A549 (cell line): ENCODE measurements at regions of chr17 and their contacts with region 1.

Region 1: GRCh38 chr17:45172454-45173286 is 11.0 kb downstream of the HEXIM2 start:
- DNase-seq: peak; percentile 90 to 99
- ATAC-seq: peak; percentile 73 to 79
- H3K4me3 ChIP-seq: peak overlapping the region; percentile 36
- H3K27ac ChIP-seq: peak overlapping the region; percentile 96 to 100
- H3K4me1 ChIP-seq: peaks cover 79% of the 10 kb centered on the region
- CTCF ChIP-seq: 0 out of 3 replicates have a peak, but pooled peaks have one; percentile 24
- EP300 ChIP-seq: peak; percentile 86 to 95
- POLR2A ChIP-seq: peak; percentile 46
- RAD21 ChIP-seq: peak; percentile 36 to 75

Region 2: DNA sequence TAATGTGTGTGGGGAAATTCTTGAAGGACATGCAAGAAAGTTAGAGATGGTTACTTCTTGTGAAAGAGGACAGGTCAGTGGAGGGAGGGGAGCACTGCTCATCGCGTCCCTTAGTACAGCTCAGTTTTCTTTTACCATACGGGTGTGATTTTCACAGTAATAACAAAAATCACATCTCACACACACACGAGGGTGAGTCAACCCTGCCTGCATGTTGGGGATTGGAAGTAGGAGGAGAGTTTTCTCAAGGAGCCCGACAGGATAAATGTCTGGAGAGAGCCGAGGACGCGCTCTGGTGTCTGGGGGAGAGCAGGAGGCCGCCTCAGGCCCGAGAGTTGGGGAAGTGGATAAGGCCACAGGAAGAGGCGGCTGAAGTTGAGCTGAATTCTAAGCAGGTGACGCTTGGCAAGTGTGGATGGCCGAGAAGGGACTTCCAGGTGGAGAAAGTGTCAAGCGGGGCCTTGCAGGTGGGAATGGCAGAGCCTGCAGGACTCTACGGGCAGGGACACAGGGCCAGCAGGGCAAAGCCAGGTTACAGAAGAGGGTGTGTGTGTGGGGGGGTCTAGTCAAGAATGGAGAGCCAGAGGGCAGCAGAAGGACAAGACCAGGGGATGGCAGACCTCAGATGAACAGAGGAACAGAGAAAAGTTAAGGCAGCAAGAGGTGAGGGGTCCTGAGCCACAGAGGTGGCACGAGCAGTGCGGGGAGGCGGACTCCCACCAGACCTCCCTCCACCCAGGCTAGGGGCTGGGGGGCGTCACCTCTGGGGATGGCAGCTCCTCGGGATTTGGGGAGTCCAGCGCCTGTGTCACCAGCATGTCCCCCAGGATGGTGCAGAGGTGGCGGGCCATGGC is 56.6 kb before region 1 on chr17:
- CTCF ChIA-PET with region 1: no interaction called
- POLR2A ChIA-PET with region 1: no interaction called
- DNase-seq: no peak
- ATAC-seq: no peak
- H3K4me3 ChIP-seq: no peak overlapping the region
- H3K27ac ChIP-seq: peak overlapping the region in 1 of 2 experiments; percentile 37; a peak in 2 of 6 replicates
- H3K4me1 ChIP-seq: 0 out of 3 replicates have a peak, but pooled peaks cover 3% of the 10 kb centered on the region
- CTCF ChIP-seq: no peak
- EP300 ChIP-seq: no peak
- POLR2A ChIP-seq: no peak
- RAD21 ChIP-seq: no peak

Region 3: DNA sequence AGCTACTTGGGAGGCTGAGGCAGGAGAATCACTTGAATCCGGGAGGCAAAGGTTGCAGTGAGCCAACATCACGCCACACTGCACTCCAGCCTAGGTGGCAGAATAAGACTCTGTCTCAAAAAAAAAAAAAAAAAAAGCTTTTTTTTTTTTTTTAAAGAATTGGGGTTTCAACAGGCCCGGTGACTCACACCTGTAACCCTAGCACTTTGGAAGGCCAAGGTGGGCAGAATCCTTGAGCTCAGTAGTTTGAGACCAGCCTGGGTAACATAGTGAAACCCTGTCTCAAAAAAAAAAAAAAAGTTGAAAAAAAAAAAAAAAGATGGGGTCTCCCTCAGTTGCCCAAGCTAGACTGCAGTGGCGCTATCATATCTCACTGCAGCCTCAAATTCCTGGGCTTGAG is 17.6 kb before region 1 on chr17:
- CTCF ChIA-PET with region 1: interaction called, 540 read pairs
- POLR2A ChIA-PET with region 1: interaction called, 371 read pairs
- DNase-seq: no peak
- ATAC-seq: no peak
- H3K4me3 ChIP-seq: no peak overlapping the region
- H3K27ac ChIP-seq: peak overlapping the region; percentile 21 to 68; a peak in 4 of 6 replicates
- H3K4me1 ChIP-seq: peaks cover 47% of the 10 kb centered on the region
- CTCF ChIP-seq: no peak
- EP300 ChIP-seq: no peak
- POLR2A ChIP-seq: no peak
- RAD21 ChIP-seq: no peak

Region 4: GRCh38 chr17:45161019-45161825 is 11.4 kb before region 1 on chr17:
- CTCF ChIA-PET with region 1: interaction called, 84 read pairs
- POLR2A ChIA-PET with region 1: interaction called, 221 read pairs
- DNase-seq: peak; percentile 98 to 100
- ATAC-seq: peak; percentile 95 to 96
- H3K4me3 ChIP-seq: peak overlapping the region; percentile 81
- H3K27ac ChIP-seq: peak overlapping the region; percentile 98 to 99
- H3K4me1 ChIP-seq: peaks cover 39% of the 10 kb centered on the region
- CTCF ChIP-seq: no peak; the same call in 1 of the 3 replicates
- EP300 ChIP-seq: no peak
- POLR2A ChIP-seq: peak; percentile 48
- RAD21 ChIP-seq: no peak; a peak in 2 of 5 replicates

Region 5: GRCh38 chr17:45184144-45184543 is 11.5 kb after region 1 on chr17:
- CTCF ChIA-PET with region 1: interaction called, 2,147 read pairs
- POLR2A ChIA-PET with region 1: interaction called, 12 read pairs
- DNase-seq: no peak
- ATAC-seq: no peak
- H3K4me3 ChIP-seq: no peak overlapping the region
- H3K27ac ChIP-seq: peak overlapping the region; percentile 60 to 79
- H3K4me1 ChIP-seq: peaks cover 23% of the 10 kb centered on the region
- CTCF ChIP-seq: no peak
- EP300 ChIP-seq: no peak
- POLR2A ChIP-seq: no peak
- RAD21 ChIP-seq: no peak

Region 6: DNA sequence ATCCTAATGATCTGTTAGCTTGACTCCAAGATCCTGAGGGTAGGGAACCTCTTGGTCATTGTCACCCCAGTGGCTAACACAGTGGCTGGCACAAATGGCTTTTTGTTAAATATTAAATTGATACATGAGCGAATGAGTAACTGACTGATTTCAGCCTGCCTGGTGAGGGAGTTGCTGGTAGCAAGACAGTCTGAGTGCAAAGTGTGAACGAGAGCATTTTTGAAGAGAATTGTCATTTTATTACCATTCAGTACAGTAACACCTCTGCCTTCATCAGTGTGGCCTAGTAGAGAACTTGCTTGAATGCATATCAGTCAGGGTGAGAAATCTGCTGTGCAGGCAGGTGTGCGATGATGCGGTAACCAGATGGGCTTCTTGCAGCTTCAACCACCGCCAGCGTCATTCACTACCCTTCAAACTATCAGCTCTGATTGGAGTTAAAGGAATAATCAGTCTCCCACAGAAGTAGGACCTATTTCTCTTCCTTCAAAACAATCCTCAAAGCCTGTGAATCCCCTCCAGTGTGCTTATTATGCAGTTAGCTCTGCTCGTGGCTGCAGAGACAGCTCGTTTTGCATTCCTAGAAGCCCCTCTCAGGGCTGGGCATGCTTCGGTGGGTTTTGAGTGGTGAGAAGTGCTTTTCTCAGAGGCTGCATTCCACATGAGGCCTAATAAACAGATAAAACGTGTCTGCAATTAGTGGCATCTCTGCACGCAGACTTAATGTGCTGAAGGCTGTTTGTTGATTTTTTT is 18.0 kb after region 1 on chr17:
- CTCF ChIA-PET with region 1: interaction called, 2,147 read pairs
- POLR2A ChIA-PET with region 1: interaction called, 12 read pairs
- DNase-seq: no peak
- ATAC-seq: peak in 1 of 2 experiments; percentile 52; a peak in 1 of 6 replicates
- H3K4me3 ChIP-seq: no peak overlapping the region
- H3K27ac ChIP-seq: peak overlapping the region; percentile 58 to 86
- H3K4me1 ChIP-seq: peaks cover 48% of the 10 kb centered on the region
- CTCF ChIP-seq: no peak
- EP300 ChIP-seq: no peak
- POLR2A ChIP-seq: no peak
- RAD21 ChIP-seq: no peak